Sciatic nerve (tissue), 2 donors: ENCODE measurements at regions of chr22 and their contacts with region 1.

Region 1: GRCh38 chr22:44410451-44411061 is 87.5 kb downstream of the RTL6 start:
- DNase-seq: peak; percentile 46
- ATAC-seq: no peak

Region 2: DNA sequence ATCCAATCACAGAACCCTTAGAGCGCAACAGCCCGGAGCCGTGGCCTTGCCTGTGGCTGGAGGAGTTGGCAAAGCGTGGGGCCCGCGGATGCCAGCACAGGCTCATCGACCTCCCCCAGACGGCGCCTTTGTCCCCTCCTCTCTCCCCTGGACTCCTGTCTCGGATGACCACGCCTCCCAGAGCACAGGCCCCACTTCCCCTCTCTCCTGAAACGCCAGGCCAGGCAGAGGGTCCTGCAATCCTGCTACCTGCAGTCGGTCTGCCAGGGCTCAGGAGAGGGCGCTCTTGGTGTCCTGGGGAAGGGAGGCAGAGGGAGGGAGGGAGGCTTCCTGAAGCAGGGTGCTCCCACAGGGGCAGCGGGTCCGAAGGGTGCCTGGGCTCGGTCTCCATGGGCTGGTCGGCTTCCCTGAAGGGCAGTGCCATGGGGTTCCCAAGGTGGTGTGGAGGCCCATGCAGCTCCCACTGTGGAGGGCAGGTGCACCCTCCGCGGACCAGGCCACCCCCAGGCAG is 1207.0 kb before region 1 on chr22:
- intact Hi-C with region 1: no loop called
- DNase-seq: no peak
- ATAC-seq: no peak

Region 3: GRCh38 chr22:44847917-44848741 is 437.6 kb after region 1 on chr22:
- intact Hi-C with region 1: loop called (anchors 10 kb)
- DNase-seq: no peak
- ATAC-seq: no peak